Adrenal gland (tissue), 19 donors: ENCODE measurements at regions of chr18 and their contacts with region 1.

Region 1: DNA sequence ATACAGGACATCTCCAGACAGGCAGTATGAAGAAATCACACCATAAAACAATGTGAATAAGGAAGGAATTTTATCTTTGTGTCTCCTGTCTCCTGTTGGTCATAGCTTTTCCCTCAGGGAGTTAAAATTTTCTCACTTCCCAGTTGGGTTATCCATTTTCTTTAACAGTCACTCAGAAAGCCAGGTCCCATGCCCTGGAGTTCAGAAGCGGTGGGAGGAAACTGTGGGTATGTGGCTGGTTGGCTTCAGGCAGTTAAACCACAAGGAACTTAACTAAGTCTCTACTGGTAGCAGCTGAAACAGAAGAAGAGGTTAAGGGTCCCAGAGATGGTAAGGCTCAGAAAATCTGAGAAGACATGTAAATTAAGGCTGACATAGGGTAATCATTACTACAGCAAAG is 6.5 kb upstream of the SMAD2 start:
- DNase-seq: no peak
- H3K4me3 ChIP-seq: no peak overlapping the region
- H3K27ac ChIP-seq: no peak overlapping the region
- H3K4me1 ChIP-seq: no peaks in the 10 kb centered on the region
- H3K27me3 ChIP-seq: no peaks in the 10 kb centered on the region
- CTCF ChIP-seq: no peak
- POLR2A ChIP-seq: no peak

Region 2: GRCh38 chr18:47815486-47816280 is 121.3 kb before region 1 on chr18:
- intact Hi-C with region 1: no loop called
- DNase-seq: no peak
- H3K4me3 ChIP-seq: no peak overlapping the region
- H3K27ac ChIP-seq: no peak overlapping the region
- H3K4me1 ChIP-seq: no peaks in the 10 kb centered on the region
- H3K27me3 ChIP-seq: no peaks in the 10 kb centered on the region
- CTCF ChIP-seq: no peak
- POLR2A ChIP-seq: no peak

Region 3: DNA sequence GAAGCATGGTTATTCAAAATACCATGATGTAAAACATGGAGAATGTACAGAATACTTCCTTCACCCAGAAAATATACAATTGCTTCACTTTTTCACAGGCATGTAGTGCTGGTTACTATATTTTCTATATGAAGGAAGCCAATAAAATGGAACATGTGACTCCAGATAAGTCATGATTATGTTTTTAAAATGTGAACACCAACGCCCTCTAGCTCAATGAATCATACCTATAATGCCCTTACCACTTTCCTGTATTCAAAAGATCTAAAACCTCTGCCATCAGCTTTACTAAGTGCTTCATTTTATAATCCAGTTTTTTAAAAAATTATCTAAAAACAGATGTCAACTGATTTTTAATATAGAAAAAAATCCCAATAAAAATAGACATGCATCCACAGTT is 66.4 kb before region 1 on chr18:
- intact Hi-C with region 1: no loop called
- DNase-seq: no peak
- H3K4me3 ChIP-seq: no peak overlapping the region
- H3K27ac ChIP-seq: no peak overlapping the region
- H3K4me1 ChIP-seq: peaks cover 0 to 18% of the 10 kb centered on the region in 2 donors
- H3K27me3 ChIP-seq: no peaks in the 10 kb centered on the region
- CTCF ChIP-seq: no peak
- POLR2A ChIP-seq: no peak

Region 4: GRCh38 chr18:48007955-48008701 is 71.2 kb after region 1 on chr18:
- intact Hi-C with region 1: loop called in 1 of 2 experiments (anchors 5 kb)
- DNase-seq: peak; percentile 78 to 91 (median 82)
- H3K4me3 ChIP-seq: peak overlapping the region in 3 of 4 donors; percentile 23 to 93 (median 67)
- H3K27ac ChIP-seq: peak overlapping the region in 3 of 5 donors; percentile 66 to 87 (median 80)
- H3K4me1 ChIP-seq: peaks cover 4 to 10% of the 10 kb centered on the region in 2 donors
- H3K27me3 ChIP-seq: no peaks in the 10 kb centered on the region
- CTCF ChIP-seq: peak in 5 of 6 experiments; percentile 15 to 89 (median 55)
- POLR2A ChIP-seq: peak in 1 of 2 donors; percentile 52